ENCODE measurements at regions of chr1 and their contacts with region 1.

Region 1: GRCh38 chr1:26787706-26788514 is at the start of gene PIGV:
- DNase-seq: no peak
- ATAC-seq: peak; percentile 78
- H3K4me3 ChIP-seq: peak within 1 kb of the TSS; percentile 72
- H3K27ac ChIP-seq: peak within 1 kb of the TSS; percentile 99
- H3K4me1 ChIP-seq: peaks cover 43% of the 10 kb centered on the region
- H3K27me3 ChIP-seq: no peaks in the 10 kb centered on the region
- CTCF ChIP-seq: no peak
- EP300 ChIP-seq: no peak
- POLR2A ChIP-seq: peak; percentile 73
- RAD21 ChIP-seq: no peak
- polyA plus RNA-seq, gene PIGV: 8.8 to 12.8 TPM

Region 2: DNA sequence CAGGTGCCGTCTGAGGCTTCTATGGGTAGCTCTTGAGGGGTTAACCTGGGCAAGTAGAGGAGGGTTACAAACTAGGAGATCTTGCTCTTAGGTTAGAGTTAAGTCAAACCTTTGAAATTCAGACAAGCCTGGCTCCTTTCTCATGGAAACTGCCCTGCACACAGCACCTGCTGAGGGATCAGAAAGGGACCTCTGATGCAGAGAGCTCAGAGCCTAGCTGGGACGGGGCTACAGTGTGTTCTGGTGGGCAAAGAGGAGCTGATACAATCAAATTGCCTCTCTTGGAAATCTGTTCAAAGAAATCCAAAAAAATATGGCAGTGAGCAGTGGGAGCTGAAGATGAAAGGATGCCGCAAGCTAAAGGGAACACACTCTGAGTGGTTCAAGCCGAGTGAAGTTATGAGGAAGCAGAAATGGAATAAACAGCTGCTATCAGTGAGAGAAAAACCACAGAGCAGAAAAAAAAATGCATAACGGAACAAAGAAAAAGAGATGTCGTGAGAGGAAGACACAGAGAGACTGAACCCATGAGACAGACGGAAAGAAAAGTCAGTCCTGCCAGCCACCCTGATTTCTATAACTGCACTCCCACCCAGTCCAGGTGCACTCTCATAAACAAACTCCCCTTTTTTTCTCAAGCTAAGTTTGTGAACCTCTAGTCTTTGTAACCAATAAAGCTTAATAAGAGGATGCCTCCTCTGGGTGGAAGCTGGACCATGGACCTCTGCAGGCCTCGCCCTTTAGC is 816.7 kb before region 1 on chr1:
- CTCF ChIA-PET with region 1: no interaction called
- POLR2A ChIA-PET with region 1: no interaction called
- RAD21 ChIA-PET with region 1: no interaction called
- SMC1A ChIA-PET with region 1: no interaction called
- in situ Hi-C with region 1: no loop called
- intact Hi-C with region 1: no loop called
- DNase-seq: no peak
- ATAC-seq: no peak; the same call in 1 of the 3 replicates
- H3K4me3 ChIP-seq: no peak overlapping the region
- H3K27ac ChIP-seq: peak overlapping the region; percentile 46; the same call in 1 of the 2 replicates
- H3K4me1 ChIP-seq: peaks cover 10% of the 10 kb centered on the region
- H3K27me3 ChIP-seq: no peaks in the 10 kb centered on the region
- CTCF ChIP-seq: no peak
- EP300 ChIP-seq: no peak
- POLR2A ChIP-seq: no peak
- RAD21 ChIP-seq: no peak

Region 3: GRCh38 chr1:26602378-26602959 is 185.4 kb before region 1 on chr1:
- CTCF ChIA-PET with region 1: interaction called, 450 read pairs
- POLR2A ChIA-PET with region 1: interaction called, 47 read pairs
- RAD21 ChIA-PET with region 1: interaction called, 262 read pairs
- SMC1A ChIA-PET with region 1: interaction called, 268 read pairs
- in situ Hi-C with region 1: loop called (anchors 5 kb)
- intact Hi-C with region 1: loop called (anchors 1 kb)
- DNase-seq: no peak
- ATAC-seq: peak; percentile 64
- H3K4me3 ChIP-seq: no peak overlapping the region
- H3K27ac ChIP-seq: no peak overlapping the region
- H3K4me1 ChIP-seq: peaks cover 10% of the 10 kb centered on the region
- H3K27me3 ChIP-seq: no peaks in the 10 kb centered on the region
- CTCF ChIP-seq: peak; percentile 77 to 86 (median 79)
- EP300 ChIP-seq: no peak
- POLR2A ChIP-seq: no peak
- RAD21 ChIP-seq: peak; percentile 99

Region 4: GRCh38 chr1:26695356-26696118 is 92.4 kb before region 1 on chr1 and contains the start of gene ARID1A:
- CTCF ChIA-PET with region 1: interaction called, 67 read pairs
- POLR2A ChIA-PET with region 1: interaction called, 69 read pairs
- RAD21 ChIA-PET with region 1: interaction called, 90 read pairs
- SMC1A ChIA-PET with region 1: interaction called, 139 read pairs
- in situ Hi-C with region 1: no loop called
- intact Hi-C with region 1: loop called (anchors 1 kb)
- DNase-seq: peak; percentile 82
- ATAC-seq: peak; percentile 69
- H3K4me3 ChIP-seq: peak within 1 kb of the TSS; percentile 98
- H3K27ac ChIP-seq: peak within 1 kb of the TSS; percentile 98
- H3K4me1 ChIP-seq: peaks cover 13% of the 10 kb centered on the region
- H3K27me3 ChIP-seq: no peaks in the 10 kb centered on the region
- CTCF ChIP-seq: no peak
- EP300 ChIP-seq: peak in 1 of 2 experiments; percentile 74; a peak in 1 of 4 replicates
- POLR2A ChIP-seq: peak; percentile 97
- RAD21 ChIP-seq: peak; percentile 27; the same call in 1 of the 2 replicates
- polyA plus RNA-seq, gene ARID1A: 10.0 to 24.5 TPM

Region 5: GRCh38 chr1:26744075-26744959 is 43.6 kb before region 1 on chr1:
- CTCF ChIA-PET with region 1: interaction called, 31 read pairs
- POLR2A ChIA-PET with region 1: interaction called, 23 read pairs
- RAD21 ChIA-PET with region 1: interaction called, 34 read pairs
- SMC1A ChIA-PET with region 1: interaction called, 30 read pairs
- in situ Hi-C with region 1: no loop called
- intact Hi-C with region 1: loop called (anchors 2 kb)
- DNase-seq: peak; percentile 99
- ATAC-seq: peak; percentile 100
- H3K4me3 ChIP-seq: peak overlapping the region; percentile 65; the same call in 1 of the 2 replicates
- H3K27ac ChIP-seq: peak overlapping the region; percentile 96
- H3K4me1 ChIP-seq: peaks cover 47% of the 10 kb centered on the region
- H3K27me3 ChIP-seq: no peaks in the 10 kb centered on the region
- CTCF ChIP-seq: no peak
- EP300 ChIP-seq: peak in 1 of 2 experiments; percentile 80; a peak in 1 of 4 replicates
- POLR2A ChIP-seq: peak; percentile 72
- RAD21 ChIP-seq: no peak; the same call in 1 of the 2 replicates

Region 6: GRCh38 chr1:26820784-26821269 is 32.9 kb after region 1 on chr1:
- CTCF ChIA-PET with region 1: interaction called, 17 read pairs
- POLR2A ChIA-PET with region 1: interaction called, 6 read pairs
- RAD21 ChIA-PET with region 1: interaction called, 11 read pairs
- SMC1A ChIA-PET with region 1: interaction called, 14 read pairs
- in situ Hi-C with region 1: no loop called
- intact Hi-C with region 1: no loop called
- DNase-seq: peak; percentile 77
- ATAC-seq: peak; percentile 100
- H3K4me3 ChIP-seq: no peak overlapping the region
- H3K27ac ChIP-seq: peak overlapping the region; percentile 23
- H3K4me1 ChIP-seq: peaks cover 11% of the 10 kb centered on the region
- H3K27me3 ChIP-seq: no peaks in the 10 kb centered on the region
- CTCF ChIP-seq: peak; percentile 65 to 68 (median 67)
- EP300 ChIP-seq: peak in 1 of 2 experiments; percentile 45; a peak in 1 of 4 replicates
- POLR2A ChIP-seq: no peak
- RAD21 ChIP-seq: peak; percentile 42

Region 7: GRCh38 chr1:26889551-26890466 is 101.9 kb after region 1 on chr1 and contains the start of gene GPN2:
- CTCF ChIA-PET with region 1: interaction called, 19 read pairs
- POLR2A ChIA-PET with region 1: no interaction called
- RAD21 ChIA-PET with region 1: interaction called, 12 read pairs
- SMC1A ChIA-PET with region 1: no interaction called
- in situ Hi-C with region 1: no loop called
- intact Hi-C with region 1: no loop called
- DNase-seq: peak; percentile 46
- ATAC-seq: peak; percentile 98
- H3K4me3 ChIP-seq: peak within 1 kb of the TSS; percentile 96
- H3K27ac ChIP-seq: peak within 1 kb of the TSS; percentile 82
- H3K4me1 ChIP-seq: peaks cover 9% of the 10 kb centered on the region
- H3K27me3 ChIP-seq: no peaks in the 10 kb centered on the region
- CTCF ChIP-seq: no peak
- EP300 ChIP-seq: no peak; a peak in 1 of 4 replicates
- POLR2A ChIP-seq: peak; percentile 94
- RAD21 ChIP-seq: no peak
- polyA plus RNA-seq, gene GPN2: 8.3 to 17.4 TPM

Region 8: GRCh38 chr1:26945728-26946127 is 157.8 kb after region 1 on chr1:
- CTCF ChIA-PET with region 1: no interaction called
- POLR2A ChIA-PET with region 1: no interaction called
- RAD21 ChIA-PET with region 1: no interaction called
- SMC1A ChIA-PET with region 1: no interaction called
- in situ Hi-C with region 1: no loop called
- intact Hi-C with region 1: no loop called
- DNase-seq: no peak
- ATAC-seq: no peak
- H3K4me3 ChIP-seq: no peak overlapping the region
- H3K27ac ChIP-seq: no peak overlapping the region
- H3K4me1 ChIP-seq: no peaks in the 10 kb centered on the region
- H3K27me3 ChIP-seq: no peaks in the 10 kb centered on the region
- CTCF ChIP-seq: no peak
- EP300 ChIP-seq: no peak
- POLR2A ChIP-seq: no peak
- RAD21 ChIP-seq: no peak

Measured in GM12878 (cell line).